Activated T-helper 2 cell treated with anti-CD3 and anti-CD28 coated beads, Interferon-gamma antibody, Interleukin-2, Interleukin-4, amounts not matched to agents 10 μg/mL and 5 μg/mL and 100 μg/mL, durations not matched to agents 14 hours and 24 hours and 36 hours (primary cell): ENCODE measurements at regions of chr5 and their contacts with region 1.

Region 1: DNA sequence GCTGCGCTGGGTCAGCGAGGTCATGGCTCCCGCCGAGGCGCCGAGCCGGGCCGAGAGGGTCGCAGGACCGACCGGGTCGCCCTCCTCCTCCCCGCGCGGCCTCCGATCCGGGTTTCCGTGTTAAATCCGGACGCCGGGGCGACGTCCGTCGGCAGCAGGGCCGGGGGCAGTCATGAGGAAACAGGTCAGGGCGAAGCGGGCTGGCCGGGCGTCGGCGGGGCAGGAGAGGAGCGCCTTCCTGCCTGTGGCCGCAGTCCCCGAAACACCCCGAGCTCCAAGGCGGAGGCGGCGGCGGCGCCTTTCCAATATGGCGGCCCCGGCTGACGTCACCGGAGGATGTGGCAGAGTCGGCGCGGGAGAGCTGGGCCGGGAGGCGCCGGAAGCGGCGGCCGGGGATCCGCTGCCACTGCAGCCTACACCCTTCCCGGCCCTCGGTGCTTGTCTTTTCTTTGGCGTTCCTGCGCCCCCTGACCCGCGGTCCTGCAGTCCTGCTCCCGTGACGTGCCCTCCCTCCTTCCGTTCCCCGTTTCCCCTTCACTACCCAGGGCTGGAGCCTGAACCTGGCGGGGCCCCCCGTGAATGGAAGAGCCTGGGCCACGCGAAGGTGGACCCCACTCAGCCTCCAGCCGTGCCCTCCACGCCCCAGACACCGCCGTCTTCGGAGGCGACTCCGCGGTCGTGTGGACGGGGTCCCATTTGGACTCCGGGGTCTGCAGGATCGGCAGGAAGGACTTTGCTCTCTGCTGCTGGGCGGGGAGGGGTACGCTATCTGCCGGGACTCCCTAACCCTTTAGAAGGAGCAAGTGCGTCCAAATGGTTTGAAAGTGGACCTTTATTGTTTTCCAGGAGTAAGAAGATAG is at the start of gene GOLPH3:
- DNase-seq: peak; percentile 90
- H3K4me3 Mint-ChIP-seq: peak within 1 kb of the TSS; percentile 98
- H3K27ac Mint-ChIP-seq: peak within 1 kb of the TSS; percentile 99
- H3K4me1 Mint-ChIP-seq: peaks cover 29% of the 10 kb centered on the region
- H3K27me3 Mint-ChIP-seq: peaks cover 2% of the 10 kb centered on the region
- total RNA-seq, gene GOLPH3: 80.1 and 81.5 TPM in 2 replicates

Region 2: DNA sequence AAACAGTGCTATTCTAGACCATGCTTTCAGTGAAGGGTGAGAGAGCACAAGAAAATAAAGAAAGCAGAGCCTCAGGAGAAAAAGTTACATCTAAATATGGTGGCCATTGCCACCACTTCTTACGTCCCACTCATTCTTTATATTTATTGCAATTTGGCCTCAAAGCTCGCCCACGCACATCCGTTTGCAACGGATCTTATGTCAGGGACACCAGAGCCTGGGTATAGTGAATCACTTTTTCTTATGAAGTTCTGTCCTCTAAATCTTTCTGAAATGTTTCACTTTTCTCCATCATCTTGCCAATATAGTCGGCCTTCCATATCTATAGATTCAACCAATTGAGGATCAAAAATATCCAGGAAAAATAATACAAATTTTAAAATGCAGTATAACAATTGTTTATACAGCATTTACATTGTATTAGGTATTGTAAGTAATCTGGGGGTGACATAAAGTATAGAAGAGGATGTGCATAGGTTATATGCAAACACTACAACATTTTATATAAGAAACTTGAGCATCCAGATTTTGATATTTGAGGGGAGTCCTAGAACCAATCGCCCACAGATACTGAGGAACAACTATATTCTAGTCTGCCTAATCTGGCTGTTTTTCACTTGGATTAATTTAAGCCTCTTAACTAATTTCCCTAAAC is 35.3 kb before region 1 on chr5:
- intact Hi-C with region 1: loop called (anchors 2 kb)
- DNase-seq: peak; percentile 28
- H3K4me3 Mint-ChIP-seq: peak overlapping the region; percentile 22
- H3K27ac Mint-ChIP-seq: peak overlapping the region; percentile 93
- H3K4me1 Mint-ChIP-seq: peaks cover 24% of the 10 kb centered on the region
- H3K27me3 Mint-ChIP-seq: no peaks in the 10 kb centered on the region

Region 3: GRCh38 chr5:32202394-32202793 is 28.2 kb after region 1 on chr5:
- intact Hi-C with region 1: no loop called
- DNase-seq: no peak
- H3K4me3 Mint-ChIP-seq: no peak overlapping the region
- H3K27ac Mint-ChIP-seq: no peak overlapping the region
- H3K4me1 Mint-ChIP-seq: peaks cover 10% of the 10 kb centered on the region
- H3K27me3 Mint-ChIP-seq: no peaks in the 10 kb centered on the region

Region 4: DNA sequence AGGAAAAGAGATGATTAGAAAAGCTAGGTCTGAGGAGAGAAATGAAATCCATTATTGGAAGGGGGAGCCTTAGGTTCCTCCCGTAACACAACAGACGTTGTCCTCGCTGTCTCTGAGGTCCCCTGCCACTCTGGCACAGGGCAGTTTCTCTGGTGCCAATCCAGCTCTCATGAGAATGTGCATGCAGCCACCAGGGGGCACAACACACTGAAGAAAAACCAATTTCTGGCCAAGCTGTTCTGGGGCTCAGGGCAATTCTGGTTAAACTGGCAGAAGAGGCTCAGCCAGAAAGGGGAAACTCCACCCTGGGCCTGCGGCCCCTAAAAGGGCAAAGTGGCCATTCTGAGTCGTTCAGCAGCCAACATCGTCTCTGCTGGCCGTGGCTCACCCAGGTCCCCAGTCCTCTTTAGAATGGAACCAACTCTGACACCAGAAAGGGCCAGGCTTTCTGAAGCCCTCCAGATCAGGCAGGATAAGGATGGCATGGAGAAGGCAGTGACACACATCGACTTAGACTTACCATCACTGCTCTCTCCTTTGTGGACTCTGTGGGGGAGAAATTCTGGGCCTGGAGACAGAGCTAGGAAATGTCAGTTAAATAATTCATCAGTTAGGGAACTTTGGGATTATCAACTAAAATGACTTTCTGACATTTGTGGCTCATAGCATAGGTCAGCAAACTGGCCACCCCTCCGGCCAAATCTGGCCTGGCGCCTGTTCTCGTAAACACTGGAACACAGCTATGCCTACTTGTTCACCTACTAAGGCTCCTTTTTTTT is 58.4 kb after region 1 on chr5:
- intact Hi-C with region 1: loop called (anchors 2 kb)
- DNase-seq: peak; percentile 63
- H3K4me3 Mint-ChIP-seq: no peak overlapping the region
- H3K27ac Mint-ChIP-seq: peak overlapping the region; percentile 82
- H3K4me1 Mint-ChIP-seq: peaks cover 25% of the 10 kb centered on the region
- H3K27me3 Mint-ChIP-seq: no peaks in the 10 kb centered on the region

Region 5: DNA sequence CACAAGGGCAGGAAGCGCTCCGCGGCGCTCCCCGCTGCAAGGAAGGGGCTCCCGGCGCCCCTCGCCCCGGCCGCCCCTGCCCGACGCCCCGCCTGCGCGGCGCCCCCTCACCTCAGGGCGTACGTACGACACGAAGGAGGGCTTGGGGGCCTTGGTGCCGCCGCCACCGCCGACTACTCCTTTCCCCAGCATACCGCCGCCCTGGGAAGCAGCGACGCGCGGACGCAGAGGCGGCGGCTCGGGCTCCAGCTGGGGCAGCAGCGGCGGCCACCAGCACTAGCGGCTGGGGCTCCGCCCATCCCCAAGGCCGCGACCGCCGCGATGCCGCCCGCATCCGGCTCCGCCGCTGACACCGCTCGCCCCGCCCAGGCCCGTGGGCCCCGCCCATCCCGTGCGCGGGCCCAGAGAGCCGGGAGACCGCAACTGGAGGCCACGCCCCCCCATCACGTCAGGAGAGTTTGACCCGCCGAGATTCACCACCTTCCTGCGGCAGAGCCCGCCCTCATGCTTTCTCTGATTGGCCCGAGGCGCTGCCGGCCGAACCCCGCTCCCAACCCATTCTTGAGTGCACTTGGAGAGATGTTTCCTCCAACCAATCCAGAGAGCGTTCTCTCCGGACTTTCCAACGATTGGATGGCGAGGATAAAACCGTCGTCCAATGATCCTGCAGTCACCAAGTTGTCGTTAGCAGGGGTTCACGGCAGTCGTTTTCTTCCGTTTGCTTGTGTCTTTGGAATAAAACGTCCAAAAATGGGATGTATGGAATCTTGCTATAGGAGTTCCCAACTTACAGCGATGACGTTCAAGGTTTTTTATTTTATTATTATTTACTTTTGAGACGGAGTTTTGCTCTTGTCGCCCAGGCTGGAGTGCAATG is 138.6 kb after region 1 on chr5 and contains the start of gene MTMR12:
- intact Hi-C with region 1: loop called (anchors 1 kb)
- DNase-seq: peak; percentile 100
- H3K4me3 Mint-ChIP-seq: peak within 1 kb of the TSS; percentile 87
- H3K27ac Mint-ChIP-seq: peak within 1 kb of the TSS; percentile 76
- H3K4me1 Mint-ChIP-seq: peaks cover 22% of the 10 kb centered on the region
- H3K27me3 Mint-ChIP-seq: no peaks in the 10 kb centered on the region
- total RNA-seq, gene MTMR12: 22.7 and 23.5 TPM in 2 replicates

Region 6: GRCh38 chr5:32413466-32414263 is 239.4 kb after region 1 on chr5:
- intact Hi-C with region 1: no loop called
- DNase-seq: no peak
- H3K4me3 Mint-ChIP-seq: no peak overlapping the region
- H3K27ac Mint-ChIP-seq: peak overlapping the region; percentile 5
- H3K4me1 Mint-ChIP-seq: peaks cover 7% of the 10 kb centered on the region
- H3K27me3 Mint-ChIP-seq: no peaks in the 10 kb centered on the region

Region 7: GRCh38 chr5:32531885-32532520 is 357.8 kb after region 1 on chr5:
- intact Hi-C with region 1: loop called (anchors 10 kb)
- DNase-seq: peak; percentile 45
- H3K4me3 Mint-ChIP-seq: peak overlapping the region; percentile 88
- H3K27ac Mint-ChIP-seq: peak overlapping the region; percentile 96
- H3K4me1 Mint-ChIP-seq: peaks cover 48% of the 10 kb centered on the region
- H3K27me3 Mint-ChIP-seq: no peaks in the 10 kb centered on the region